ENCODE measurements at regions of chr3 and their contacts with region 1.

Region 1: GRCh38 chr3:8441969-8442559 is 59.6 kb upstream of the LMCD1 start:
- DNase-seq: no peak
- H3K4me3 ChIP-seq: no peak overlapping the region
- H3K27ac ChIP-seq: no peak overlapping the region
- H3K4me1 ChIP-seq: peaks cover 11% of the 10 kb centered on the region
- H3K27me3 ChIP-seq: no peaks in the 10 kb centered on the region
- CTCF ChIP-seq: peak; percentile 56 to 75 (median 68)
- POLR2A ChIP-seq: no peak

Region 2: DNA sequence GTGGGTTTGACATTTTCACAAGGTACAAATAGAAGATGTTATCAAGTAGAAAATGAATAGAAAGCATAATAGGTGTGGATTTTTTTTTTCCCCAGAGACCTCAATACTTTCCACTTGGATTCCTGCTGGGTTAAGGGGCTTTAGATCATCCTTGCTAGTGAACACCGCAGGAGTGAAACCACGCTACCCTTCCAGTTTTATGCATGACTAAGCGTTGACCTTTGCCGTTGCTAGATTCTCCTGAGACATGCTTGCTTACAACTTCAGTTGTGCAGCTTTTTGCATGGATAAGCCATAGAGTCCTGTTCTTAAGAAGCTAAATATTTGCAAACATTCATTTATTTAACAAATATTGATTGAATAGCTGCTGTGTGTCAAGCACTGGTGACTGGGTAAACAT is 240.2 kb before region 1 on chr3:
- intact Hi-C with region 1: no loop called
- DNase-seq: no peak
- H3K4me3 ChIP-seq: no peak overlapping the region
- H3K27ac ChIP-seq: no peak overlapping the region
- H3K4me1 ChIP-seq: no peaks in the 10 kb centered on the region
- H3K27me3 ChIP-seq: no peaks in the 10 kb centered on the region
- CTCF ChIP-seq: no peak
- POLR2A ChIP-seq: no peak

Region 3: DNA sequence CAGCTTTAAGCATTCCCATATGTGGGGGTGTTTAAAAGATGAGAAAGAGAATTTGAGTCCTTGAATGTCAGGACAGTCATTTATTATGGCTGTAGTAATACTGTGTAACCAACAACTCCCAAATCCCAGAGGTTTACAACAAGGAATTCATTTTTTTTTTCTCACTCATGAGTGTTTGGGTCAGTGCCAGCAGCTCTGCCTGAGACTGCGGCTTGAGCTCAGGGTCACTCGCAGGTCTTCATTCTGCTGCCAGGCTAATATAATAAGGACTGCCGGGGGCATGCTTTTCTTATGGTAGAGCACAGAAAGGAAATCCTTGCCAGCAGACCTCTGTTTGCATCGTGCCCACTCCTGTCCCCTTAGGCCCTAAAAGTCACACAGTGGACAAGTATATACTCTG is 218.3 kb before region 1 on chr3:
- intact Hi-C with region 1: no loop called
- DNase-seq: peak; percentile 59
- H3K4me3 ChIP-seq: no peak overlapping the region
- H3K27ac ChIP-seq: no peak overlapping the region
- H3K4me1 ChIP-seq: peaks cover 8% of the 10 kb centered on the region
- H3K27me3 ChIP-seq: no peaks in the 10 kb centered on the region
- CTCF ChIP-seq: no peak
- POLR2A ChIP-seq: no peak

Region 4: DNA sequence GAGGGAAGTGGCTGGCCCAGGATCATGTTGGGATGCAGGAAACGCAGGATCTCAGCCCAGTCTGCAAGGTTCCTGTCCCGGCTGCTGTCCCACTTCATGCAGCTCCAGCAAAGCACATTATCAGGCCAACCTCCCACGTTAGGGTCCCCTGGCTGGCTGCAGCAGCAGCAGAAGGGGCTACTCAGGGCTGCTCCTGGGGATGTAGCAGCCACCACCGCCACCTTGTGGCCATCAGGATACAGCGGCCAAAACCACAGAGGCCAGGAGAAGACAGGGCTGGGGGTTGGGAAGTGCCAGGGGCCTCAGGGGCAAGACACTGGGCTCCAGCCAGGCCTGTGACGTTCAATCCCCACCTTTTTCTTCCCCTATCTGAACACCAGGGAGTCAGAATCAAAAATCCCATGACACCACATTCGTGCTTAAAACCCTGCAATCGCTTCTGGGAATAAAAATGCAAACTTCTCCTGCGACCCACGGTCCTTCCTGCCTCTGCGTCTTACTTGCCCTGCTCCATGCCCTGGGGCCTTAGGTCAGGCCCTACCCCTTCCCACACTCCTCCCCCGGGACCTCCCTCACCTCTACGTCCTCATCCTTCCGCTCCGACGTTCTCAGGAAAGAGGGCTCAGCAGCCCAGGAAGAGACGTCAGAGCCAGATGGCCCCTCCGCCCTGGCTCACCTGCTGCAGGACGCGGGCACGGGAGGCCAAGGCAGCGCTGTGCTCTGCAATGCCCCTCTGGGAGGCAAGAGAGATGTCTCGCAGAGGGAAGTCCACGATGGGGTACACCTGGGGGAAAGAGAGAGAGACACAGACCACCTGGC is 181.0 kb after region 1 on chr3:
- intact Hi-C with region 1: loop called (anchors 10 kb)
- DNase-seq: peak; percentile 84
- H3K4me3 ChIP-seq: no peak overlapping the region
- H3K27ac ChIP-seq: no peak overlapping the region
- H3K4me1 ChIP-seq: peaks cover 5% of the 10 kb centered on the region
- H3K27me3 ChIP-seq: no peaks in the 10 kb centered on the region
- CTCF ChIP-seq: peak; percentile 71 to 88 (median 87)
- POLR2A ChIP-seq: no peak

Measured in testis (tissue), 5 donors.